ENCODE measurements at regions of chr1 and their contacts with region 1.

Region 1: DNA sequence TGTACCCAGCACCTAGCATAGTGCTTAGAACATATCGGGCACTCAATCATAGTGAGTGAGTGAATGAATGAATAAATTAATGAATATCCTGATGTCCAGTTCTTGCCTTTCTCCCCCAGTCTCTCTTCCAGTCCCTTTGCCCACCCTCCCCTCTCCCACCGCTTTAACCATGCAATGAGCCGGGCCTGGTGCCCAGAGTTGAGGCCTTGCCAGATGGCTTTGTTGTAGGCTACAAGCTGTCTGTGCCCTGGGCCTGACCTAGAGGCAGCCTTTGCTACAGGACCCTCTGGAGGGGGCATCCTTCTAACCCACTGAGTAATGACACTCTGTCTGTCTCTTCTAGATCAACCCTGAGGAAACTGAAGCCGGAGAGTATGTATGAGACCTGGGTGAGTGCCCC is 6.9 kb downstream of the CASQ1 start:
- DNase-seq: no peak
- H3K4me3 ChIP-seq: no peak overlapping the region
- H3K27ac ChIP-seq: no peak overlapping the region
- H3K4me1 ChIP-seq: no peaks in the 10 kb centered on the region
- H3K27me3 ChIP-seq: no peaks in the 10 kb centered on the region
- CTCF ChIP-seq: no peak

Region 2: GRCh38 chr1:160108888-160109662 is 88.2 kb before region 1 on chr1:
- dilution Hi-C with region 1: loop called (anchors 5 kb)
- DNase-seq: no peak
- H3K4me3 ChIP-seq: no peak overlapping the region
- H3K27ac ChIP-seq: no peak overlapping the region
- H3K4me1 ChIP-seq: peaks cover 3% of the 10 kb centered on the region
- H3K27me3 ChIP-seq: no peaks in the 10 kb centered on the region
- CTCF ChIP-seq: peak; percentile 49 to 62 (median 57)